Activated CD8-positive, alpha-beta T cell treated with anti-CD3 and anti-CD28 coated beads, Interleukin-2, amount 10 ng/mL, durations not matched to agents 7 days and 5 days (primary cell): ENCODE measurements at regions of chr14 and their contacts with region 1.

Region 1: GRCh38 chr14:80941241-80942182 is at the start of gene CEP128:
- DNase-seq: peak; percentile 93
- ATAC-seq: peak; percentile 97
- H3K4me3 Mint-ChIP-seq: peak within 1 kb of the TSS; percentile 92
- H3K27ac Mint-ChIP-seq: peak within 1 kb of the TSS; percentile 87
- H3K4me1 Mint-ChIP-seq: peaks cover 29% of the 10 kb centered on the region
- H3K27me3 Mint-ChIP-seq: no peaks in the 10 kb centered on the region
- total RNA-seq, gene CEP128: 32.9 to 35.8 TPM

Region 2: GRCh38 chr14:80923368-80923767 is 18.1 kb before region 1 on chr14:
- CTCF ChIA-PET with region 1: interaction called, 12 read pairs
- POLR2A ChIA-PET with region 1: no interaction called
- DNase-seq: no peak
- ATAC-seq: no peak
- H3K4me3 Mint-ChIP-seq: no peak overlapping the region
- H3K27ac Mint-ChIP-seq: no peak overlapping the region
- H3K4me1 Mint-ChIP-seq: peaks cover 33% of the 10 kb centered on the region
- H3K27me3 Mint-ChIP-seq: no peaks in the 10 kb centered on the region

Region 3: GRCh38 chr14:80930836-80931389 is 10.6 kb before region 1 on chr14:
- CTCF ChIA-PET with region 1: interaction called, 10 read pairs
- POLR2A ChIA-PET with region 1: interaction called, 43 read pairs
- DNase-seq: peak; percentile 77
- ATAC-seq: peak; percentile 94
- H3K4me3 Mint-ChIP-seq: peak overlapping the region; percentile 42
- H3K27ac Mint-ChIP-seq: peak overlapping the region; percentile 77
- H3K4me1 Mint-ChIP-seq: peaks cover 71% of the 10 kb centered on the region
- H3K27me3 Mint-ChIP-seq: no peaks in the 10 kb centered on the region

Region 4: GRCh38 chr14:81220830-81221578 is 279.5 kb after region 1 on chr14 and contains the start of gene GTF2A1:
- CTCF ChIA-PET with region 1: interaction called, 3 read pairs
- POLR2A ChIA-PET with region 1: interaction called, 11 read pairs
- DNase-seq: peak; percentile 94
- ATAC-seq: peak; percentile 80
- H3K4me3 Mint-ChIP-seq: peak within 1 kb of the TSS; percentile 97
- H3K27ac Mint-ChIP-seq: peak within 1 kb of the TSS; percentile 98
- H3K4me1 Mint-ChIP-seq: peaks cover 31% of the 10 kb centered on the region
- H3K27me3 Mint-ChIP-seq: peaks cover 2% of the 10 kb centered on the region
- total RNA-seq, gene GTF2A1: 33.6 to 33.7 TPM